ENCODE measurements at regions of chr3 and their contacts with region 1.

Region 1: GRCh38 chr3:128497387-128498126 is 4.6 kb upstream of the GATA2 start:
- DNase-seq: peak in 1 of 2 donors; percentile 89
- H3K4me3 ChIP-seq: peak overlapping the region; percentile 54 to 58
- H3K27ac ChIP-seq: peak overlapping the region; percentile 59
- H3K4me1 ChIP-seq: peaks cover 21% of the 10 kb centered on the region
- H3K27me3 ChIP-seq: no peaks in the 10 kb centered on the region
- CTCF ChIP-seq: peak; percentile 36 to 86 (median 67)
- POLR2A ChIP-seq: no peak

Region 2: GRCh38 chr3:128080320-128081080 is 417.1 kb before region 1 on chr3:
- intact Hi-C with region 1: loop called (anchors 10 kb)
- DNase-seq: no peak
- H3K4me3 ChIP-seq: no peak overlapping the region
- H3K27ac ChIP-seq: no peak overlapping the region
- H3K4me1 ChIP-seq: peaks cover 17% of the 10 kb centered on the region
- H3K27me3 ChIP-seq: no peaks in the 10 kb centered on the region
- CTCF ChIP-seq: no peak
- POLR2A ChIP-seq: no peak

Region 3: DNA sequence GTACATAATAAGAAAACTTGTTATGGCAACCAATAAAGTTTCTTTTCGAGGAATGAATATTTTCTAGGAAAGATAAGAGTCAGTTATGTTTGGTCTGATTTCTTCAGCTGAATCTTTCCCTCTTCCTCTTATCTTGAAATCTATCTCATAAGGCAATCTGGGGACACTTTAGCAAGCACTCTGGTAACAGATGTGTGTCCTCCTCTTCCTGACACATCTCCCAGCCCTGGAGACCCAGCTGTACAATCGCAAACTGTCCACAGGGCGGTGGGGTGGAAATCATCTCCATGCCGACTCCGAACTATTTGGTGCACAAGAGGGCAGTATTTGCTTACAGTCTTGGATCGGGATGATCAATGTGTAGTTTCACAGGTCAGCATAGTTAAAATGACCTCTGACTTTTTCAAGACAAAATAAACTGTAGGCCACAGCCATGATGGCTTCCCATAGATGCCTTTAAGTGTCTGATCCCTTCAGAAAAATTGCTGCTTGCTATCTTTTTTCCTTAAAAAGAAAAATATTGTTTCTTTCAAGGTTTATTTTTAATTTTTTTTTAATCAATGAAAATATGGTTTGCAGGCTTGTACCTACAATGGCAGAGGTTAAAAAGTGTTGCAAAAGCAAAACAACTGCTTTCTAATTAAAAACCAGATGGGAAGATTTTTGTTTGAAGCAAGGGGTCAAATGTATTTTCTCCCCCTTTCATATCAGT is 326.6 kb before region 1 on chr3:
- intact Hi-C with region 1: loop called (anchors 5 kb)
- DNase-seq: no peak
- H3K4me3 ChIP-seq: no peak overlapping the region
- H3K27ac ChIP-seq: no peak overlapping the region
- H3K4me1 ChIP-seq: peaks cover 20% of the 10 kb centered on the region
- H3K27me3 ChIP-seq: no peaks in the 10 kb centered on the region
- CTCF ChIP-seq: peak in 2 of 3 experiments; percentile 52 to 91
- POLR2A ChIP-seq: no peak

Region 4: DNA sequence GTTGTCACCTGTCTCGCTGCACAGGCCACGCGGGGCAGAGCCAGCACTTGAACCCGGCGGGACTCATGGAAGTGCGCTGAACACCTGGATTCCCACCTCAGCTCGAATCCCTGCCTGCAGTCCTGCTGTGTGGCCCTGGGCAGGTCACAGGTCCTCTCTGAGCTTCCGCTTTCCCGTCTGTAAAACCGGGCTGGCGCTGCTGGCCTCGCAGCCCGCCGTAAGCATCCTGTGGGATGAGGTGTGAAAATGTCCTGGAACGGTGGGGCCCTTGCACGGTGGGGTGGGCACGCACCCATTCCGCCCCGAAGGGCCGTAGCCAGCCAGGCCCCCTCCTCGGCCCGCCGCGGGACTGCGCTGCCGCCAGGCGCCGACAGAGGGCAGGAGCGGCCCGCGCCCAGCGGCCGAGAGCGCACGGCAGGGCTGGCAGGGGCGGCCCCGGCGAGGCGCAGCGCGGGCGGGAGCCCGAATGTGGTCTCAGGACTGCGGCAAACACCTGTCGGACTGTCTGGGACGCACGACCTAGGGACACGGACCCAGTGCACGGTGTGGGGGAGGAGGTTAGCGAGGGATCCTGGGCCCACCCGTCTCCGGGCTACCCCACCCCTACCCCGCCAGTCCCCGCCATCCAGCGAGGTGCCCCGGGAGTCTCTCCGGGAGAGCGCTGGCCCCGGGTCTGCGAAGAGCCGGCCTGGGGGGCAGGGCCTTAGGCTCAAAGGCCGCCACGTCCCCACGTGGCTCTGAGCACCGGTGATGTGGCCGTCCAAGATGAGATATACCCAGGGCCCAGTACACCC is 71.2 kb before region 1 on chr3:
- intact Hi-C with region 1: loop called (anchors 5 kb)
- DNase-seq: no peak
- H3K4me3 ChIP-seq: peak overlapping the region; percentile 20 to 37
- H3K27ac ChIP-seq: no peak overlapping the region
- H3K4me1 ChIP-seq: no peaks in the 10 kb centered on the region
- H3K27me3 ChIP-seq: no peaks in the 10 kb centered on the region
- CTCF ChIP-seq: peak; percentile 66 to 78 (median 78)
- POLR2A ChIP-seq: no peak